Heart left ventricle (tissue), 16 donors: ENCODE measurements at regions of chr15 and their contacts with region 1.

Region 1: DNA sequence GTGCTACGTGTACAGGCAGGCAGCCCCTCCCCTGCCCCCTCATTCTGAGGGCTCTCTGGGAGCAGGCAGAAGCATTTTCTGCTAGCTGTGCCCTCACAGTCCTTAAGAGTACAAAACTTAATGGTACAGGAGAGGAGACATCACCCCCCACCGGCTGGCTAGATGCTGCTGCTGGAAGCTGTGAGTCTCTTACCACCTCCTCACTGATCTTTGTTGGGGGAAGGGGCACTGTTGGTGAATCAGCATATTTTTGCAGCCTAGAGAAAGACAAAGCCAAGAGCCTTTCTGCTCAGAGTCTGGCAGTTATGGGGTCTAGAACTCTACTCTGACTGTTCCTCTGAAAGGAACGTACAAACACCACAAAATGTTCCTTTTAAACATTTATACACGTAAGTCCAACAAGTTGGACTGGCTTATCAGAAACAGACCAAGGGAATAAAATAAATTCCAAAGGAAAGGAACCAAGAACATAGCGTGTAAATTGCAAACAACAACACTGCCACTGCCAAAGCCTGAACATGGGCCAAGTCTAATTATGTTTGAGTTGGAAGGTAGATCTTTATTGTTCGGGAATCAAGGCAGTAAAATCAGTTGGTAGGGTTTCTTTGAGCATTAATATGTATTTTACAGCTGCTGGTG is 27.2 kb downstream of the CLK3 start:
- DNase-seq: no peak
- ATAC-seq: peak in 1 of 4 donors; percentile 33
- H3K4me3 ChIP-seq: no peak overlapping the region
- H3K27ac ChIP-seq: peak overlapping the region in 4 of 12 donors; percentile 15 to 39 (median 30)
- H3K4me1 ChIP-seq: peaks cover 0 to 41% (median 25%) of the 10 kb centered on the region in 12 donors
- H3K27me3 ChIP-seq: no peaks in the 10 kb centered on the region
- CTCF ChIP-seq: no peak
- POLR2A ChIP-seq: no peak

Region 2: DNA sequence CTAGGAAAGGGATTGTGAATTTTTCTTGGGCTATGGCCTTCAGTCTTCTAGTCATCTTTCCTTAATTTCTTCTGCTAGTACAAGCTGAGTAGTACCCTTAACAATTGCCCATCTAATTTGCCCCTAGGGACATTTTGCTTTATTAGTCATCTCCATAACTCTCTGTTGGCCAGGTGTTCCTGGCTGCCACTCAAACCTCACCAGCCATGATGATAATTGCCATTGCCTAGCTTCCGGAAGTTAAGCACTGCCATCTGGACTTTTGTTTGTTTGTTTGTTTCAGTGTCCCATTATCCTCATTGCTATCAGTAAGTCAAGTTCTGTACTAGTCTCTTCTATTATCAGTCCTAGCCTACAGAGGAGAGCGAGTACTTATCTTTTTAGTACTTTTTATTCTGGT is 145.3 kb before region 1 on chr15:
- intact Hi-C with region 1: no loop called
- DNase-seq: no peak
- ATAC-seq: no peak
- H3K4me3 ChIP-seq: no peak overlapping the region
- H3K27ac ChIP-seq: no peak overlapping the region
- H3K4me1 ChIP-seq: no peaks in the 10 kb centered on the region
- H3K27me3 ChIP-seq: no peaks in the 10 kb centered on the region
- CTCF ChIP-seq: no peak
- POLR2A ChIP-seq: no peak

Region 3: DNA sequence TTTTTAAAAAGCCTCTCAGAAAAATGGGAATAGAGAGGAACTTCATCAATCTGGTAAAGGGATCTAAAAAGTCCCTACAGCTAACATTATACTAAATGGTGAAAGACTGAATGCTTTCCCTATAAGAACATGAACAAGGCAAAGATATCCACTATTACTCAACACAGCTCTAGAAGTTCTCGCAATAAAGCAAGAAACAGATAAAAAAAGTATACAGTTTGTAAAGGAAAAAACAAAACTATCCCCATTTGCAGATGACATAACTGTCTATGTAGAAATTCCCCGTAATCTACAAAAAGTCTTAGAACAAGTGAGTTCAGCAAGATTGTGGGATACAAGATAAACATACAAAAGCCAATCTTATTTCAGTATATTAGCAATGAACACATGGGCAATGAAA is 37.6 kb after region 1 on chr15:
- intact Hi-C with region 1: loop called in 1 of 10 experiments (anchors 5 kb)
- DNase-seq: no peak
- ATAC-seq: no peak
- H3K4me3 ChIP-seq: no peak overlapping the region
- H3K27ac ChIP-seq: no peak overlapping the region
- H3K4me1 ChIP-seq: no peaks in the 10 kb centered on the region
- H3K27me3 ChIP-seq: no peaks in the 10 kb centered on the region
- CTCF ChIP-seq: no peak
- POLR2A ChIP-seq: no peak

Region 4: GRCh38 chr15:74695597-74696397 is 52.9 kb after region 1 on chr15 and contains the start of gene EDC3:
- intact Hi-C with region 1: loop called in 1 of 10 experiments (anchors 10 kb)
- DNase-seq: peak; percentile 90 to 94 (median 91)
- ATAC-seq: peak; percentile 94 to 99 (median 98)
- H3K4me3 ChIP-seq: peak within 1 kb of the TSS; percentile 61 to 92 (median 81)
- H3K27ac ChIP-seq: peak within 1 kb of the TSS in 11 of 12 donors; percentile 62 to 89 (median 76)
- H3K4me1 ChIP-seq: peaks cover 0 to 29% (median 14%) of the 10 kb centered on the region in 12 donors
- H3K27me3 ChIP-seq: no peaks in the 10 kb centered on the region
- CTCF ChIP-seq: no peak
- POLR2A ChIP-seq: peak in 1 of 2 donors; percentile 45
- total RNA-seq, gene EDC3: 7.3 to 23.0 (median 16.5) TPM

Region 5: DNA sequence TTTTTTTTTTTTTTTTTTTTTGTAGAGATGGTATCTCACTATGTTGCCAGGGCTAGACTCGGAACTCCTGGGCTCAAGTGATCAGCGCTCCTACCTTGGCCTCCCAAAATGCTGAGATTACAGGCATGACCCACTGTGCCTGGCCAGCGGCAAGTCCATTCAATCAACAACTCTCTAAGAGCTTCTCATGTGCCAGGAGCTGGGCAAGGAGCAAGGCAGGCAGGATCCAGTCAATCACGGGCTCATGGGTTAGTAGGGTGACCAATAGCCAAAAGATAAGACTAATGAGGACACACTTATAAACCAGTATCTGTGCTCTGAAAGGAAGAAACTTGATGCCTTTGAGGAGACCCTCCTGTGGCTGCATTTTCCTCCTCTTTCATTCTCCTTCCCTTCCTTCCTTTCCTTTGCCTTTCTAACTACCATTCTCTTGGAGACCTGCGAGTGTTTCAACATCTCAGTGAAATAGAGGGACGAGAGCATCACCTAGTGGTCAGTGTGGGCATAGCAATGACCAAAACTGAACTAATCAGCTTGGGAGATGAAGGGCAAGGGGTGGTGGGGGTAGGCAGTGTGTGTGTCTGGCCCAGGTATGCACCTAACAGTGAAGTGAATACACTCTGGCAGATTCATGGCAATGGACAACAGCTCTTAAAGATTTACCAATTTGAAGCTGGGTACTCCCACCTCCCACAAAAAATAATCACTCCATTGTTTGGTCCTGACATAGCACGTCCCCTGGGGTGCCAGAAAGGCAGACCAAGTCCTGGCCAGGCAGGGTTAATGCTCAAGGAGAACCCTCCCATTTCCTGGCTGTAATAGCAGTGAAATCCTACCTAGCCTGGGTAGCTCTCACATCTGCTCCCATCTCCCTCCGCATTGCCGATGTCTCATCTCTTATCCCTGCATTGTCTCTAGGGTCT is 307.5 kb after region 1 on chr15:
- intact Hi-C with region 1: loop called in 6 of 10 experiments (anchors 5 to 10 kb)
- DNase-seq: peak in 4 of 5 donors; percentile 55 to 70 (median 56)
- ATAC-seq: peak in 3 of 4 donors; percentile 68 to 83 (median 77)
- H3K4me3 ChIP-seq: no peak overlapping the region
- H3K27ac ChIP-seq: no peak overlapping the region
- H3K4me1 ChIP-seq: peaks cover 0 to 19% (median 9%) of the 10 kb centered on the region in 12 donors
- H3K27me3 ChIP-seq: no peaks in the 10 kb centered on the region
- CTCF ChIP-seq: peak; percentile 92 to 98 (median 95)
- POLR2A ChIP-seq: no peak